GM10248 (cell line): ENCODE measurements at regions of chr15 and their contacts with region 1.

Region 1: DNA sequence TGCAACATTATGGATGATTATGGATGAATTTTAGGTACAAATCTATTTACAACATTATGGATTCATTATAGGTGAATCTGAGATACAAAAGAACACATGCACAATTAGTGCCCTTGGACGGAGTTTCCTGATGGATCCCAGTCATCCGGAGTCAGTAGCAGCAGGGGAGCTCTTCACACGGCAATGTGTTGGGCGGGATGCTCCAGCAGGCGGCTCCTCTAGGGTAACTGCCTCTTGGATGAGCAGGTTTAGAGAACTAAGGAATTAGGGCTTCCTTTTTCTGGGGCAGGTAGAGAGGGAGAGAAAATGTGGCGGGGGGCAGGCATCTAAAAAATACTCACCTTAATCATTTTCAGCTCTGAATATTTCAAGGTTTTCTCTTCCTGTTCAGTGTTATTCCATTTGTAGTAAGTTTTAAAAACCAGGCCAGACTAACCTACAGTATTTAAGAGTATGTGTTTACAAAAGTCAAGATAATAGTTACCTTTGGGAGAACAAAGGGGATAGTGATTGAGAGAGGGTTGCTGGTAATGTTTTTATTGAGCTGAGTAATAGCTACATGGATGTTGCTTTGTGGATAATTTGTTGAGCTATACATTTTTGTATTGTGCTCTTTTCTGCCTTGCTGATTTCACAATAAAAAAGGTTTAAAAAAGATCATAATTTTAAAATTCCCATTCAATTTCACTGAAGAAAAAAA is 27.4 kb upstream of the GOLM2 start:
- DNase-seq: no peak
- CTCF ChIP-seq: no peak

Region 2: GRCh38 chr15:43808960-43809678 is 452.0 kb before region 1 on chr15:
- CTCF ChIA-PET with region 1: no interaction called
- POLR2A ChIA-PET with region 1: no interaction called
- DNase-seq: peak; percentile 60
- CTCF ChIP-seq: no peak

Region 3: GRCh38 chr15:44250566-44251205 is 10.5 kb before region 1 on chr15:
- CTCF ChIA-PET with region 1: interaction called, 15 read pairs
- POLR2A ChIA-PET with region 1: no interaction called
- DNase-seq: no peak
- CTCF ChIP-seq: no peak

Region 4: DNA sequence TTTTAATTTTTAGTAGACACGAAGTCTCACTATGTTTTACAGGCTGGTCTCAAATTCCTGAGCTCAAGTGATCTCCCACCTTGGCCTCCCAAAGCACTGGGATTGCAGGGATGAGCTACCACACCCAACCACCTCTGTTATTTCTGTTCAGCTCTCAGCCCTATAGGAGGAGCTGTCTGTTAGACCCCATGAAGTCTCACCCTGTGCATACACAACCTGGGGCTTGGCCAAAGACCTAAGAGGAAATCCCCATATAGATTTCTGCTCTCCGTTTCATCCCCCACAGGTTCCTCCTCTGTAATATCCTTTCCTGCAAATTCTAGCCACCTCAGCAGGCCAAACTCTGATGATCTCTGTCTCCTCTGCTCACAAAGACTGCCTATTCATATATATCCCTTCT is 109.7 kb after region 1 on chr15:
- CTCF ChIA-PET with region 1: no interaction called
- POLR2A ChIA-PET with region 1: no interaction called
- DNase-seq: peak; percentile 38
- CTCF ChIP-seq: no peak